HEK293T (cell line): ENCODE measurements at regions of chr11 and their contacts with region 1.

Region 1: DNA sequence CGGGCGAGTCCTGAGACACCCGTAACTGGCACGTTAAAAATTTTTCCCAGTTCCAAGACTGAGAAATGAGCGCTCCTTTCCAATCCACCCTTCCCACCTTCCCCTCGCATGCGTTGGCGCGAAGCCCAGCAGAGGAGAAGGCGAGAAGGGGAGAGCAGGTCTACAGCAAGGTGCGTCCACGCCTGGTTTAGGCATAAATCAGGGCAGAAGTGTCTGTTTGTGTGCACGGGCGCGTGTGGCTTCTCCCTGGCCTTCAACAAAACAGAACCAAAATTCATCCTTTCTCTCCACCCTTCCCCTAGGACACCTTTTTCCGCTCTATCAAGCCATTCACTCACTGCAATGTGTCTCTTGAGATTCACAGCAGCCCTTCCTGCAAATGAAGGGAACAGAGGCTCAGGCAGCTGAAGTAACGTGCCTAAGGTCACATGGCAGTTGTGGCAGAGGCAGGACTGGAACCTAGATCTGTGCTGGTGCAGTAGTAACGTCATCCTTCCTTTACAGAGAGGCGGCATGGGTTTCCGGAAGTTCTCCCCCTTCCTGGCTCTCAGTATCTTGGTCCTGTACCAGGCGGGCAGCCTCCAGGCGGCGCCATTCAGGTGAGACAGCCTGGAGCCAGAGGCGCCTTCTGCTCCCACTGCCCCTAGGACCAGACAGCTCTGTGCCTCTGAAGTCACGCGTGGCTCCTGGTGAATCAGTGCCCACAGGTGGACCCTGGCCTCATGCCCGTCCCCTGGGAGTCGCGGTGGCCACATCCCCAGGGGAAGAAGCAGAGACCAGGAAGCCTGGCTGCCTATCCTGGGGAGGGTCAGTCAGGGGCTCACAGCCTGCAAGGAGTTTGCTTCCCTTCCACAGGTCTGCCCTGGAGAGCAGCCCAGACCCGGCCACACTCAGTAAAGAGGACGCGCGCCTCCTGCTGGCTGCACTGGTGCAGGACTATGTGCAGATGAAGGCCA is 1.1 kb downstream of the CALCB start:
- DNase-seq: peak; percentile 75

Region 2: GRCh38 chr11:14974515-14975251 is 99.8 kb before region 1 on chr11:
- CTCF ChIA-PET with region 1: interaction called, 36 read pairs
- POLR2A ChIA-PET with region 1: interaction called, 9 read pairs
- DNase-seq: peak; percentile 39

Region 3: GRCh38 chr11:15038963-15039362 is 35.5 kb before region 1 on chr11:
- CTCF ChIA-PET with region 1: interaction called, 11 read pairs
- POLR2A ChIA-PET with region 1: interaction called, 7 read pairs
- DNase-seq: no peak